ENCODE measurements at regions of chr1 and their contacts with region 1.

Region 1: DNA sequence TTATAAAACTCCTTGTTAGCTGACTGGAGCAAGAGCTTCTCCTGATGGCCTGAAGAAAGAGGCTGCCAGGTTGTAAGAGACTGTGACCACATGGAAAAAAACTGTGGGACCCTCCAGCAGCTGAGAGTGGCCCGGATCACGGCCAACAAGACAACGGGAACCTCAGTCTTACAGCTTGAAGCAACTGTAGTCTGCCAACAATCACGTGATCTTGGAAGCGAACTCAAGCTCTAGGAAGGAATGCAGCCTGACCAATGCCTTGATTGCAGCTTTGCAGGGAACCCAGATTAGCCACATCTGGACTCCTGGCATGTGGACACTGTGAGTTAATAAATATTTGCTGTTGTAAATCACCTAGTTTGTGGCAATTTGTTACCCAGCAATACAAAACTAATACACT is 442.6 kb upstream of the PRMT6 start:
- DNase-seq: no peak
- ATAC-seq: no peak
- H3K4me3 ChIP-seq: no peak overlapping the region
- H3K27ac ChIP-seq: no peak overlapping the region
- H3K4me1 ChIP-seq: no peaks in the 10 kb centered on the region
- H3K27me3 ChIP-seq: no peaks in the 10 kb centered on the region
- CTCF ChIP-seq: no peak

Region 2: GRCh38 chr1:106647323-106647722 is 33.5 kb after region 1 on chr1:
- intact Hi-C with region 1: loop called in 1 of 10 experiments (anchors 5 kb)
- DNase-seq: no peak
- ATAC-seq: no peak
- H3K4me3 ChIP-seq: no peak overlapping the region
- H3K27ac ChIP-seq: no peak overlapping the region
- H3K4me1 ChIP-seq: no peaks in the 10 kb centered on the region
- H3K27me3 ChIP-seq: no peaks in the 10 kb centered on the region
- CTCF ChIP-seq: no peak

Measured in heart right ventricle (tissue), 16 donors.